Activated naive CD4-positive, alpha-beta T cell treated with anti-CD3 and anti-CD28 coated beads for 36 hours (primary cell): ENCODE measurements at regions of chr11 and their contacts with region 1.

Region 1: DNA sequence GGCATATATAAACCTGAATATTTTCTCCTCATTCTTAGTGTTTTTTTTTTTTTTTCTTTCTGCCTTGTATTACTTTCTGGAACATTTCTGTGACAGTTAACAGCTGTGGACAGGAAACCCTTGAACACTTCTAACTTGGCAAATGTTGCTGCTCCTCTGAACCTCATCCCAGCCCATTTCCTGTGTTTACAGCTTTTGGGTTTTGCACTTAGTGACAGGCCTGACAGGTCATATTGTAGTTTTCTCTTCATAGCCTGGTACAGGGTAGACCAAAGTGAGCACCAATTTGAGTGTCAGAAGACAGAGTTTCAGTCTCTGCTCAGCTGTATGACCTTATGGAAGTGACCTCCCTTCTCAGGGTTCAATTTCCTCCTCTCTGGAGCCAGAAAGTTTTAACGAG is 91.6 kb downstream of the STIM1 start:
- DNase-seq: peak; percentile 75
- H3K4me3 Mint-ChIP-seq: no peak overlapping the region
- H3K27ac Mint-ChIP-seq: peak overlapping the region; percentile 89
- H3K4me1 Mint-ChIP-seq: peaks cover 92% of the 10 kb centered on the region
- H3K27me3 Mint-ChIP-seq: no peaks in the 10 kb centered on the region

Region 2: DNA sequence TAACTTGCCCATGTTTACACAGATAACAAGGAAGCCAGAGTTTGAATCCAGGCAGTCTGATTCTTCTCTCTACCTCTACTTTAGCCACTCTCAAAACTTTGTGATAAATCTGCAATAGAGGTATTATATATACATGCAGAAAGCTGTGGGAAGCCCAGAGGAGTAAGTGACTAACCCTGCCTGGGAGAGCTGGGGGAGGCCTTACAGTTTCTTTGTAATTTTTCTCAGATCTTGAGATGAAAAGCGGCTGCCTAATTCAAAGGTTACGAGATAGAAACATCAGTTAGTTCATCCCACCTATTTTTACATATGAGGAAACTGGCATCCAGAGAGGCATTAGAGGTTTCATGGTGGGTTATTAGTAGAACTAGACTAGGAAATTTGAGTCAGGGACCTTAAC is 86.7 kb before region 1 on chr11:
- CTCF ChIA-PET with region 1: interaction called, 10 read pairs
- intact Hi-C with region 1: loop called (anchors 1 kb)
- DNase-seq: peak; percentile 68
- H3K4me3 Mint-ChIP-seq: peak overlapping the region; percentile 73
- H3K27ac Mint-ChIP-seq: peak overlapping the region; percentile 92
- H3K4me1 Mint-ChIP-seq: peaks cover 73% of the 10 kb centered on the region
- H3K27me3 Mint-ChIP-seq: no peaks in the 10 kb centered on the region

Region 3: DNA sequence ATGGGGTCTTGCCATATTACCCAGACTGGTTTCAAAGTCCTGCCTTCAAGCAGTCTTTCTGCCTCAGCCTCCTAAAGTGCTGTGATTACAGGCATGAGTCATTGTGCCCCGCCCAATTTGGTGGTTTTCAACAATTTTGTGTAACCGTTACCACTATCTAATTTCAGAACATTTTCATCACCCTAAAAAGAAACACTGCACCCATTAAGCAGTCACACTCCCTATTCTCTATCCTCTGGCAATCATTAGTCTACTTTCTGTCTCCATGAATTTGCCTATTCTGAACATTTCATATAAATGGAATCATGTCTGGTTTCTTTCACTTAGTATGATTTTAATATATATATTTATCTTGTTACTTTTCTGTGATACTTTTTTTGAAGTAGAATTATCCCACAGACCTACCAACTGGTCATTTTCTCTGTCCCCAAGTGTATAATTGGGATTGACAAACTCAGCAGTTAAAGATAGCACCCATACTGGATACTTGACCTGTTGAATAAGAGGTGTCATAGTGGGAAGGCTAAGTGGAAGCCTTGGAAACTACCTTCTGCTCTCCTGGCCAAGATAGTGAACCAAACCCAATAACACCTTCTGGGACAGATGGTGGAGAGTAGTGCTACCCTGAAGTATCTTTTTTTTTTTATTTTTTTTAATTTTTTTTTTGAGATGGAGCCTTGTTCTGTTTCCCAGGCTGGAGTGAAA is 26.8 kb before region 1 on chr11:
- CTCF ChIA-PET with region 1: interaction called, 5 read pairs
- intact Hi-C with region 1: loop called (anchors 1 kb)
- DNase-seq: peak; percentile 93
- H3K4me3 Mint-ChIP-seq: no peak overlapping the region
- H3K27ac Mint-ChIP-seq: peak overlapping the region; percentile 74
- H3K4me1 Mint-ChIP-seq: peaks cover 61% of the 10 kb centered on the region
- H3K27me3 Mint-ChIP-seq: no peaks in the 10 kb centered on the region

Region 4: GRCh38 chr11:3959015-3959919 is 12.2 kb after region 1 on chr11:
- CTCF ChIA-PET with region 1: interaction called, 6 read pairs
- intact Hi-C with region 1: loop called (anchors 1 kb)
- DNase-seq: no peak
- H3K4me3 Mint-ChIP-seq: no peak overlapping the region
- H3K27ac Mint-ChIP-seq: no peak overlapping the region
- H3K4me1 Mint-ChIP-seq: peaks cover 79% of the 10 kb centered on the region
- H3K27me3 Mint-ChIP-seq: no peaks in the 10 kb centered on the region

Region 5: GRCh38 chr11:3971756-3972404 is 24.8 kb after region 1 on chr11:
- CTCF ChIA-PET with region 1: interaction called, 3 read pairs
- intact Hi-C with region 1: loop called (anchors 1 kb)
- DNase-seq: no peak
- H3K4me3 Mint-ChIP-seq: no peak overlapping the region
- H3K27ac Mint-ChIP-seq: no peak overlapping the region
- H3K4me1 Mint-ChIP-seq: peaks cover 68% of the 10 kb centered on the region
- H3K27me3 Mint-ChIP-seq: no peaks in the 10 kb centered on the region

Region 6: DNA sequence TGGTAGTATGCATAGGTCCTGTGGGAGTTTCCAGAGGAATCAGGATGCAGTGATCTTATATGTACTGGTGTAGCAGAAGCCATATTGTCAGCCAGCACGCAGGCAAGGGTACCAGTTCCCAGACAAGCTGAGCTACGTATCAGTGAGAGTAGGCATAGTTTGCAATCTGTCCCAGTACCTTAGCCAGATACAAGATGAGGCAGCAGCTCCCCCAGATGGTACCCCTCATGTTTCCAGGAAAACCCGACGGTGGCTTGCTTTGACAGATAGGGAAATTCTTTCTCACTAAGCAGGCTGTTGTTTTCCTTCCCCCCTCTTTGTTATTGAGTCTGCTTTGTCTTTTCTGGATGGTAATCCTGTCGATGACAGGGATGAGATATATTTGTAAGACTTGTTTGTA is 37.8 kb after region 1 on chr11:
- CTCF ChIA-PET with region 1: interaction called, 6 read pairs
- intact Hi-C with region 1: loop called (anchors 2 kb)
- DNase-seq: peak; percentile 80
- H3K4me3 Mint-ChIP-seq: no peak overlapping the region
- H3K27ac Mint-ChIP-seq: peak overlapping the region; percentile 55
- H3K4me1 Mint-ChIP-seq: peaks cover 74% of the 10 kb centered on the region
- H3K27me3 Mint-ChIP-seq: no peaks in the 10 kb centered on the region

Region 7: GRCh38 chr11:3995949-3996554 is 49.0 kb after region 1 on chr11:
- CTCF ChIA-PET with region 1: no interaction called
- intact Hi-C with region 1: no loop called
- DNase-seq: no peak
- H3K4me3 Mint-ChIP-seq: no peak overlapping the region
- H3K27ac Mint-ChIP-seq: no peak overlapping the region
- H3K4me1 Mint-ChIP-seq: peaks cover 34% of the 10 kb centered on the region
- H3K27me3 Mint-ChIP-seq: no peaks in the 10 kb centered on the region